ENCODE measurements at regions of chr1 and their contacts with region 1.

Region 1: GRCh38 chr1:30911046-30911954 is 2.7 kb upstream of the SDC3 start:
- DNase-seq: peak; percentile 77 to 95
- H3K4me3 ChIP-seq: no peak overlapping the region
- H3K4me1 ChIP-seq: peaks cover 3% of the 10 kb centered on the region; the same call in 1 of the 2 replicates
- H3K27me3 ChIP-seq: no peaks in the 10 kb centered on the region

Region 2: GRCh38 chr1:29230553-29231378 is 1680.5 kb before region 1 on chr1 and contains the start of gene MECR:
- in situ Hi-C with region 1: loop called (anchors 25 kb)
- DNase-seq: peak; percentile 83 to 96
- H3K4me3 ChIP-seq: peak within 1 kb of the TSS; percentile 89
- H3K4me1 ChIP-seq: peaks cover 5% of the 10 kb centered on the region
- H3K27me3 ChIP-seq: no peaks in the 10 kb centered on the region

Region 3: GRCh38 chr1:30718636-30719405 is 192.5 kb before region 1 on chr1:
- in situ Hi-C with region 1: loop called (anchors 5 kb)
- DNase-seq: peak; percentile 88 to 89
- H3K4me3 ChIP-seq: peak overlapping the region; percentile 49
- H3K4me1 ChIP-seq: 0 out of 2 replicates have a peak, but pooled peaks cover 2% of the 10 kb centered on the region
- H3K27me3 ChIP-seq: no peaks in the 10 kb centered on the region

Region 4: DNA sequence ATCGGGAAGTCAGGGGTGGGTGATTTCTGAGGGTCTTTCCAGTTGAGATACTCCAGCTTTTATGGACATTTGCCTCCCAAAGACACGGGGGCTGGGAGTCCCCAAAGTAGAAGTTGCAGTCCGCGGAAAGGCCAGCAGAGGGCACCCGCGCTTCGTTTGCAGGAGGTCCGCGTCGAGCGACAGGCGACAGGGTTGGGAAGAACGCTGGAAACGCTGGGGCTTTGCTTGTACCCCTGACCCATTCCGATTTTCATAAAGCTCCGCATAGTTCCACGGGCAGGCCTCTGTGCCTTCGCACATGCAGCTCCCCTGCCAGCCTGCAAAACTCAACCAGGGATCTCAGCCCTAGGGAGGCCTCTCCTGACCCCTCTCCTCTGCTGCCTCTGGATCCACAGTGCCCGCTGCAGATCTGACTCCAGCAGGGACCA is 109.5 kb before region 1 on chr1:
- in situ Hi-C with region 1: loop called (anchors 5 kb)
- DNase-seq: peak; percentile 76 to 93
- H3K4me3 ChIP-seq: no peak overlapping the region
- H3K4me1 ChIP-seq: no peaks in the 10 kb centered on the region; the same call in 1 of the 2 replicates
- H3K27me3 ChIP-seq: no peaks in the 10 kb centered on the region

Region 5: GRCh38 chr1:31072304-31072746 is 161.0 kb after region 1 on chr1:
- in situ Hi-C with region 1: no loop called
- DNase-seq: no peak
- H3K4me3 ChIP-seq: no peak overlapping the region
- H3K4me1 ChIP-seq: no peaks in the 10 kb centered on the region
- H3K27me3 ChIP-seq: no peaks in the 10 kb centered on the region